K562 (cell line): ENCODE measurements at regions of chr7 and their contacts with region 1.

Region 1: GRCh38 chr7:39732837-39733804 is 109.7 kb downstream of the RALA start:
- DNase-seq: peak; percentile 89 to 94 (median 92)
- ATAC-seq: peak; percentile 96
- H3K4me3 ChIP-seq: peak overlapping the region; percentile 40
- H3K27ac ChIP-seq: peak overlapping the region; percentile 4; the same call in 1 of the 3 replicates
- H3K4me1 ChIP-seq: peaks cover 12 to 14% of the 10 kb centered on the region in 2 experiments; a peak in 3 of 5 replicates
- H3K27me3 ChIP-seq: no peaks in the 10 kb centered on the region
- CTCF ChIP-seq: no peak
- EP300 ChIP-seq: no peak
- POLR2A ChIP-seq: peak; percentile 63
- RAD21 ChIP-seq: no peak

Region 2: GRCh38 chr7:39394105-39394680 is 338.9 kb before region 1 on chr7:
- CTCF ChIA-PET with region 1: no interaction called
- POLR2A ChIA-PET with region 1: no interaction called
- in situ Hi-C with region 1: no loop called
- intact Hi-C with region 1: no loop called
- DNase-seq: no peak
- ATAC-seq: no peak
- H3K4me3 ChIP-seq: no peak overlapping the region
- H3K27ac ChIP-seq: no peak overlapping the region
- H3K4me1 ChIP-seq: no peaks in the 10 kb centered on the region
- H3K27me3 ChIP-seq: no peaks in the 10 kb centered on the region; a peak in 1 of 5 replicates
- CTCF ChIP-seq: no peak
- EP300 ChIP-seq: no peak
- POLR2A ChIP-seq: no peak
- RAD21 ChIP-seq: no peak

Region 3: DNA sequence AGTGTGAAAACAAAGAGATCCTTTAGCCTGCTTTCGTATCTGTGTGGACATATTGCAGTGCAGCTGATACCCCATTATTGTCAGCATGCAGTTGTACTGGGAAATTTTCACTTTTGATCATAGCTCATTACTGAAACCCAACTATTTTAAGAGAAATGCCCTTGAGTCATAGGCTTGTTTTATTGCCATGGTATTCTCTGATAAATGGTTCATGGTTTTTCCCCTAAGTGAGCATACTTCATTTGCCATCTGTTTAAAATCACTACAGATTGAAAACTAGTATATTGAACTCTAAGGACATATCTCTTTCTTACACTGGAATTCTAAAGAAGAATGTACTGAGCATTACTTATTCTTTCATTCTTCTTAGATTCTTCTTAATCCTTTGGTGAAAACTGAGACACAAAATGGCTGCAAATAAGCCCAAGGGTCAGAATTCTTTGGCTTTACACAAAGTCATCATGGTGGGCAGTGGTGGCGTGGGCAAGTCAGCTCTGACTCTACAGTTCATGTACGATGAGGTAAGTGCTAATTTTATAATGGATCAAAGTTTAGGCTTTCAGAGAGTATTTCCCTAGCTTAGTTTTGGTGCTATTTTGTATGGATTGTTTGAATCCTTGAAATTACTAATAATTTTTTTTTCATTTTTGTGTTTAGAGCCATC is 46.7 kb before region 1 on chr7:
- CTCF ChIA-PET with region 1: no interaction called
- POLR2A ChIA-PET with region 1: no interaction called
- in situ Hi-C with region 1: no loop called
- intact Hi-C with region 1: no loop called
- DNase-seq: no peak
- ATAC-seq: no peak
- H3K4me3 ChIP-seq: no peak overlapping the region
- H3K27ac ChIP-seq: no peak overlapping the region
- H3K4me1 ChIP-seq: peaks cover 0 to 3% of the 10 kb centered on the region in 2 experiments; a peak in 2 of 5 replicates
- H3K27me3 ChIP-seq: no peaks in the 10 kb centered on the region
- CTCF ChIP-seq: no peak
- EP300 ChIP-seq: no peak
- POLR2A ChIP-seq: no peak
- RAD21 ChIP-seq: no peak

Region 4: DNA sequence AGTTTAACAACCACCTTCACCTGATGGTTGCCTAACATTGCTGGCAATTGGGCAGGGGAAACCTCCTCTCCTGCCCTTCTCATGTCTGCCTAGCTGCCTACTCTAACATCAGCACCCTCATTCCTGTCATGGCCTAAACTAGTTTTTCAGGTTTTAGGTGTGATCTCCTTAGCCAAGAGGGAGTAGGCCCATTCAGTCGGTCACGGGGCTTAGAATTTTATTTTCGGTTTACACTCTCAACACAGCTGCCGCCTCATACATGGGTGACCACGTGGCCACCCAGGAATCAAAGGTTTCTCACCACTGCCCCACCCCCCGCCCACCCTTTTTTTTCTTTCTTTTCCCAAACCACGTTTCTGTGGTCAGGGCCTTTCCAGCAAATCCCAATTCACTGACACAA is 12.5 kb before region 1 on chr7:
- CTCF ChIA-PET with region 1: no interaction called
- POLR2A ChIA-PET with region 1: interaction called, 14 read pairs
- in situ Hi-C with region 1: no loop called
- intact Hi-C with region 1: no loop called
- DNase-seq: peak; percentile 20 to 63 (median 33)
- ATAC-seq: peak; percentile 23; the same call in 2 of the 3 replicates
- H3K4me3 ChIP-seq: peak overlapping the region; percentile 52
- H3K27ac ChIP-seq: peak overlapping the region; percentile 67
- H3K4me1 ChIP-seq: peaks cover 0 to 12% of the 10 kb centered on the region in 2 experiments; a peak in 3 of 5 replicates
- H3K27me3 ChIP-seq: no peaks in the 10 kb centered on the region; a peak in 1 of 5 replicates
- CTCF ChIP-seq: no peak
- EP300 ChIP-seq: no peak
- POLR2A ChIP-seq: no peak
- RAD21 ChIP-seq: no peak